ENCODE measurements at regions of chr1 and their contacts with region 1.

Region 1: GRCh38 chr1:230104395-230105244 is 37.6 kb downstream of the GALNT2 start:
- DNase-seq: peak; percentile 57
- CTCF ChIP-seq: no peak

Region 2: DNA sequence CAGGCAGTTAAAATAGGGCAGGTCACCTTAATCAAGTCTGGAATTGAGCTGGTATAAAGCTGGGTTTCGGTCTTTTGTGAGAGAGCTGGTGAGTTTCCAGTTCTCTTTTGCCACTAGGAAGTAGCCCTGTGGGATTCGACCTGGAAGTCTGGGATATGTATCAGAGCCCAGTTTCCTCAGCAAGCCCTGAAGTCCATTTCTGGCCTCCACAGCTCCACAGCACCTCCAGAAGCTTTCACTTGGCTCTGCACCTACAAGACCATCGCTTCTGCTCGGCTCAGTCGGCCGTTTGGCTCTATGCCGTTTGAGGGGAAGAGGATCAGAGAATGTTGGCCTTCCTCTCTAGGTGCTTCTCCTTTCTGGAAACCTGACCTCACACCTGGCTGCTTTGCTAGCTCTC is 110.4 kb after region 1 on chr1:
- in situ Hi-C with region 1: loop called (anchors 10 kb)
- DNase-seq: no peak
- CTCF ChIP-seq: peak; percentile 15